ENCODE measurements at regions of chr13 and their contacts with region 1.

Region 1: GRCh38 chr13:24360106-24360505 is 50.7 kb downstream of the C1QTNF9 start:
- DNase-seq: no peak
- H3K4me3 ChIP-seq: no peak overlapping the region
- H3K27ac ChIP-seq: no peak overlapping the region
- H3K4me1 ChIP-seq: no peaks in the 10 kb centered on the region
- H3K27me3 ChIP-seq: peaks cover 0 to 4% of the 10 kb centered on the region in 2 donors
- CTCF ChIP-seq: no peak

Region 2: GRCh38 chr13:22944378-22944777 is 1415.7 kb before region 1 on chr13:
- intact Hi-C with region 1: loop called (anchors 10 kb)
- DNase-seq: no peak
- H3K4me3 ChIP-seq: no peak overlapping the region
- H3K27ac ChIP-seq: no peak overlapping the region
- H3K4me1 ChIP-seq: no peaks in the 10 kb centered on the region
- H3K27me3 ChIP-seq: peaks cover 0 to 3% of the 10 kb centered on the region in 2 donors
- CTCF ChIP-seq: no peak

Region 3: GRCh38 chr13:24491845-24492244 is 131.7 kb after region 1 on chr13:
- intact Hi-C with region 1: no loop called
- DNase-seq: no peak
- H3K4me3 ChIP-seq: no peak overlapping the region
- H3K27ac ChIP-seq: no peak overlapping the region
- H3K4me1 ChIP-seq: no peaks in the 10 kb centered on the region
- H3K27me3 ChIP-seq: no peaks in the 10 kb centered on the region
- CTCF ChIP-seq: no peak

Region 4: DNA sequence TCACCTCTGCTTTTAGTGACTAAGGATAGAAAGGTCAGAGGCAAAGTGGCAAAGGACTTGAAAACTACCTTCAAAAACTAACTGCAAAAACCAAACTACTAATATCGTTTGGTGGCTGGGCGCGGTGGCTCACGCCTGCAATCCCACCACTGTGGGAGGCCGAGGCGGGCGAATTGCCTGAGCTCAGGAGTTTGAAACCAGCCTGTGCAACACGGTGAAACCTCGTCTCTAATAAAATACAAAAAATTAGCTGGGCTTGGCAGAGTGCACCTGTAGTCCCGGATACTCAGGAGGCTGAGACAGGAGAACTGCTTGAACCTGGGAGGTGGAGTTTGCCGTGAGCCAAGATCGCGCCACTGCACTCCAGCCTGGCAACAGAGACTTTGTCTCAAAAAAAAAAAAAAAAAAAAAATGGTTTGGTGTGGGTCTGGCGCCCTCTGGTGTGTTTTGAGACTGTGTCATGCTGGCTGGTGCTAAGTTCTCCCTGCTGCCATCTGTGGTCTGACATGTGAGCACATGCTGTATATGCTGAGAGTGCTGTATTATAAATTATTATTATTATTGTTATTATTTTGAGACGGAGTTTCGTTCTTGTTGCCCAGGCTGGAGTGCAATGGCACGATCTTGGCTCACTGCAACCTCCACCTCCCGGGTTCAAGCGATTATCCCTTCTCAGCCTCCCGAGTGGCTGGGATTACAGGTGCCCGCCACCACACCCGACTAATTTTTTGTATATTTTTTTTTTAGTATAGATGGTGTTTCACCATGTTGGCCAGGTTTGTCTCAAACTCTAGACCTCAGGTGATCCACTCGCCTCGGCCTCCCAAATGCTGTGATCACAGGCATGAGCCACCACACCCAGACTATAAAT is 367.9 kb after region 1 on chr13:
- intact Hi-C with region 1: no loop called
- DNase-seq: peak; percentile 70 to 76
- H3K4me3 ChIP-seq: no peak overlapping the region
- H3K27ac ChIP-seq: no peak overlapping the region
- H3K4me1 ChIP-seq: peaks cover 0 to 11% (median 0%) of the 10 kb centered on the region in 4 donors
- H3K27me3 ChIP-seq: peaks cover 0 to 4% of the 10 kb centered on the region in 2 donors
- CTCF ChIP-seq: peak; percentile 68 to 79

Measured in tibial artery (tissue), 4 donors.